H1 (cell line): ENCODE measurements at regions of chr6 and their contacts with region 1.

Region 1: GRCh38 chr6:6074190-6074589 is 67.5 kb upstream of the NRN1 start:
- DNase-seq: no peak
- H3K4me3 ChIP-seq: no peak overlapping the region
- H3K27ac ChIP-seq: no peak overlapping the region
- H3K4me1 ChIP-seq: no peaks in the 10 kb centered on the region
- H3K27me3 ChIP-seq: no peaks in the 10 kb centered on the region
- CTCF ChIP-seq: no peak
- EP300 ChIP-seq: no peak
- POLR2A ChIP-seq: no peak
- RAD21 ChIP-seq: no peak

Region 2: GRCh38 chr6:6057424-6058053 is 16.7 kb before region 1 on chr6:
- CTCF ChIA-PET with region 1: interaction called, 30 read pairs
- POLR2A ChIA-PET with region 1: no interaction called
- DNase-seq: no peak
- H3K4me3 ChIP-seq: no peak overlapping the region
- H3K27ac ChIP-seq: no peak overlapping the region
- H3K4me1 ChIP-seq: no peaks in the 10 kb centered on the region
- H3K27me3 ChIP-seq: no peaks in the 10 kb centered on the region
- CTCF ChIP-seq: peak in 2 of 3 experiments; percentile 44 to 68; a peak in 2 of 4 replicates
- EP300 ChIP-seq: no peak
- POLR2A ChIP-seq: no peak
- RAD21 ChIP-seq: peak; percentile 63 to 67

Region 3: GRCh38 chr6:6091608-6092002 is 17.4 kb after region 1 on chr6:
- CTCF ChIA-PET with region 1: no interaction called
- POLR2A ChIA-PET with region 1: no interaction called
- DNase-seq: no peak
- H3K4me3 ChIP-seq: no peak overlapping the region
- H3K27ac ChIP-seq: no peak overlapping the region
- H3K4me1 ChIP-seq: no peaks in the 10 kb centered on the region
- H3K27me3 ChIP-seq: no peaks in the 10 kb centered on the region
- CTCF ChIP-seq: no peak
- EP300 ChIP-seq: no peak
- POLR2A ChIP-seq: no peak
- RAD21 ChIP-seq: no peak